Tibial artery (tissue), 4 donors: ENCODE measurements at regions of chr22 and their contacts with region 1.

Region 1: DNA sequence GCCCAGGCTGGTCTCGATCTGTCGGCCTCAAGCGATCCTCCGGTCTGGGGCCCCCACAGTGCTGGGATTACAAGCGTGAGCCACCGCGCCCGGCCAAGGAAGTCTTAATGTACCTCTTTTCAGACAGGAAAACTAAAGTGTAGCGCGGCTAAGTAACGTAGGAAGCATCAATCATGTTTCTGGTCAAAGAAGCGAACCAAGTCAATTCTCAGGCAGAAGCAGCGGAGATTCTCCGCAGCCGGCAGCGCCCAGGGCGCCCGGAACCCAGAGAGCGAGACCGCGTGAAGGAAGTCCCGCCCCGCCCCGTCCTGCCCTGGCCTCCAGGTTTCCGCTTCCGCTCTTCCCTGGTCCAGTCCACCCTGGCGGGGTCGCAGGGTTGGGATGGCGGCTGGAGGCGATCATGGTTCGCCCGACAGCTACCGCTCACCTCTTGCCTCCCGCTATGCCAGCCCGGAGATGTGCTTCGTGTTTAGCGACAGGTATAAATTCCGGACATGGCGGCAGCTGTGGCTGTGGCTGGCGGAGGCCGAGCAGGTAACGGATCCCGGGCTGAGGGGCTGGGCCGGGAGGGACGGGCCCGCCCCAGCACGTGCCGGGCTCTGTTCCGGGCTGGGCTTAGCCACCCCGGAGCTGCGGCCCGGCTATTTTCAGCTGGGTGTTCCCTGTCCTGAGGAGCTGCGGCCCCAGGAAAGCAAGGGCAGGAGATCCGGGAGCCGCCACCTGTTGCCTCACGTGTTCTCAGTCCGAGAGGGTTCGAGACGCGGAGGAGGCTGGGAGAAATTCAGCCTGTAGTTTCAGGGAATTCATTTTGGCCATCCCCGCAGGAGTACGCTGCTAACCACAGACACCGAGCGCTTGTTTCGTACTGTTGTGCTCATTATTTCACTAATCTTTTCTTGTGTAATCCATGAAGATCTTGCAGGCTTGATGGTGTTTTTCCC is at the start of gene ADSL:
- DNase-seq: peak; percentile 85 to 93
- H3K4me3 ChIP-seq: peak within 1 kb of the TSS; percentile 70 to 71
- H3K27ac ChIP-seq: peak within 1 kb of the TSS; percentile 82 to 87
- H3K4me1 ChIP-seq: peaks cover 0 to 23% (median 19%) of the 10 kb centered on the region in 4 donors
- H3K27me3 ChIP-seq: no peaks in the 10 kb centered on the region
- CTCF ChIP-seq: peak; percentile 19 to 20

Region 2: DNA sequence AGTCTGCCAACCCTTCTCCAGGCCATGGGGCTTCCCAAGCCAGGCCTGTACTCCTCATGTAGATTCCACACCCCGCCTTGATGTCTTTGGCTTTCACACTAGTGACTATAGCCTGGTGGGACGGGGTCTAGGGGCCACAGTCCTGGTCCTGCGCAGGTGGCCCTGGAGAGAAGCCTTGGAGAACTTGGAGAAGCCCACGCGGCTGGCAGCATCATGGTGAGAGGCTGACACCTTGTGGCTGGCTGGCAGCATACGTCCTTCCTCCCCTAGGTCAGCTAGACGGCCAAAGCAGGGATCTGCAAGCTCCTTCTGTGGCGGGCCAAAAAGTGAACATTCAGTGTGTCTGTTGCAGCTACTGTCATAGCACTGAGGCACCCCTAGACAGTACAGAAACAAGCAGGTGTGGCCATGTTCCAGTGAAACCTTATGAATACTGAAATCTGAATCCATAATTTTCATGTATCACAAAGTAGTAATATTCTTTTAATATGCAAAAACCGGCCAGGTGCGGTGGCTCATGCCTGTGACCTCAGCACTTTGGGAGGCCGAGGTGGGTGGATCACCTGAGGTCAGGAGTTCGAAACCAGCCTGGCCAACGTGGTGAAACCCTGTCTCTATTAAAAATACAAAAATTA is 309.7 kb before region 1 on chr22:
- intact Hi-C with region 1: loop called (anchors 5 kb)
- DNase-seq: peak in 1 of 2 donors; percentile 45
- H3K4me3 ChIP-seq: no peak overlapping the region
- H3K27ac ChIP-seq: no peak overlapping the region
- H3K4me1 ChIP-seq: peaks cover 0 to 13% (median 4%) of the 10 kb centered on the region in 4 donors
- H3K27me3 ChIP-seq: peaks cover 0 to 63% of the 10 kb centered on the region in 2 donors
- CTCF ChIP-seq: peak; percentile 50 to 51

Region 3: GRCh38 chr22:40156001-40156516 is 190.4 kb before region 1 on chr22:
- intact Hi-C with region 1: no loop called
- DNase-seq: no peak
- H3K4me3 ChIP-seq: no peak overlapping the region
- H3K27ac ChIP-seq: peak overlapping the region; percentile 36 to 42
- H3K4me1 ChIP-seq: peaks cover 0 to 21% (median 10%) of the 10 kb centered on the region in 4 donors
- H3K27me3 ChIP-seq: no peaks in the 10 kb centered on the region
- CTCF ChIP-seq: peak in 1 of 2 experiments; percentile 14